ENCODE measurements at regions of chr13 and their contacts with region 1.

Region 1: GRCh38 chr13:113816946-113817859 is 46.7 kb downstream of the GAS6 start:
- DNase-seq: peak; percentile 69 to 90 (median 85)
- ATAC-seq: peak; percentile 91
- H3K4me3 ChIP-seq: no peak overlapping the region
- H3K4me3 Mint-ChIP-seq: peak overlapping the region; percentile 75 to 100 (median 86)
- H3K27ac ChIP-seq: no peak overlapping the region
- H3K27ac Mint-ChIP-seq: peak overlapping the region in 8 of 9 donors; percentile 40 to 95 (median 76)
- H3K4me1 ChIP-seq: peaks cover 10 to 11% of the 10 kb centered on the region in 2 donors
- H3K4me1 Mint-ChIP-seq: peaks cover 13 to 30% (median 23%) of the 10 kb centered on the region in 7 donors
- H3K27me3 ChIP-seq: no peaks in the 10 kb centered on the region
- H3K27me3 Mint-ChIP-seq: peaks cover 0 to 3% (median 0%) of the 10 kb centered on the region in 5 donors

Region 2: DNA sequence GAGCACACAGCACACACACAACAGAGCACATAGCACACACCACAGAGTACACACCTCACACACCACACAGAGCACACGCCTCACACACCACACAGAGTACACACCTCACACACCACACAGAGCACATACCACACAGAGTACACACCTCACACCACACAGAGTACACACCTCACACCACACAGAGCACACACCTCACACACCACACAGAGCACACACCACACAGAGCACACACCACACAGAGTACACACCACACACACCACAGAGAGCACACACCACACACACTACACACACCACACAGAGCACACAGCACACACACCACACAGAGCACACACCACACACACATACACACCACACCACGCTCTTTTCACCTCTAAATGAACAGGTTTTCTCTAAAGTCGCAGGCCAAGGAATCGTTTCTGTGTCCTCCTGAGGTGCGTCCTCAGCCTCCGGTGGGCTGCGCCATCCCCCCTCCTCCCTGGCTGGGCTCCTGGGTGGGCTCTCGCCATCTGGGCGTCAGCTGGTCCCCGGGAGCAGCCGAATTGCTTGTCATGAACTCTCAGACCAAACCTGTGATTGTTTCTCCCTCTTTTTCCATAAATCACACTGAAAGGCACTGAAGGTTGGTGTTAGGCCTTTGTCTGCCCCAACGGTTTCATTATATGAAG is 20.9 kb before region 1 on chr13:
- CTCF ChIA-PET with region 1: no interaction called
- POLR2A ChIA-PET with region 1: no interaction called
- intact Hi-C with region 1: no loop called
- DNase-seq: no peak
- ATAC-seq: no peak
- H3K4me3 ChIP-seq: no peak overlapping the region
- H3K4me3 Mint-ChIP-seq: no peak overlapping the region
- H3K27ac ChIP-seq: no peak overlapping the region
- H3K27ac Mint-ChIP-seq: no peak overlapping the region
- H3K4me1 ChIP-seq: no peaks in the 10 kb centered on the region
- H3K4me1 Mint-ChIP-seq: no peaks in the 10 kb centered on the region
- H3K27me3 ChIP-seq: no peaks in the 10 kb centered on the region
- H3K27me3 Mint-ChIP-seq: peaks cover 0 to 4% (median 0%) of the 10 kb centered on the region in 5 donors

Region 3: DNA sequence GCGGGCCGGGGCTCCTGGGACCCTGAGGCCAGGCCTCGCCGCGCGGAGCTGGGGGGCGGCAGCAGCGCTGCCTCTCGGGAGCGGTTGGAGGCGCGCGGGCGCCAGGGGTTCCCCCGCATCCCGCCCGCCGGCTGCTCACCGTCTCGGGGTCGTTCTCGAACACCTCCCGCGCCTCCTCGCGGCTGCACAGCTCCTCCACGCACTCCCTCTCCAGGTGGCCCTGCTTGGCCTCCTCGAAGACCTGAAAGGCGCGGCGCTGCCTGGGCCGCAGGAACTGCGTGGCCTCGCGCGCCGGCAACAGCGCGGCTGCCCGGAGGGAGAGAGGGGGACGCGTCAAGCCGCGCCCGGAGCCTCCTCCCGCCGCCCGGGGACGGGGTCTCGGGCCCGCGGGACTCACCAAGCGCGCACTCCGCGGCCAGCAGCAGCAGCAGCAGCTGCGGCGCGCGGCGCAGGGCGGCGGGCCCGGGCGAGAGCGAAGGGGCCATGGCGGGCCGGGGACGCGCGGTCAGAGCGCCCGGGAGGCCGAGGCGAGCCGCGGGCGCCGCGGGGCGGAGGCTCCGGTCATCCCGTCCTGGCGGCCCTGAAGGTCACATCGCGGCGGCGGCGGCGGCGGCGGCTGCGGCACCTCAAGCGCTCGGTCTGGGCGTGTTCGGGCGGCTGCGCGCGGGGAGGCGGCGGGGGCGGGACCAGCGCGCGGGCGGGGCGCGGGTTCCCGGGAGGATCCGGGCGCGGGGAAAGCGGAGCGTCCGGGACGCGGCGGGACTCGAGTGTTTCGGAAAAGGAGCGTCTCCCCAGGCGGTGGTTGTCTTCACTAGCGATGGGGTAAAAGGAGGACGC is 46.5 kb after region 1 on chr13 and contains the start of gene GAS6:
- CTCF ChIA-PET with region 1: no interaction called
- POLR2A ChIA-PET with region 1: no interaction called
- intact Hi-C with region 1: loop called in 1 of 2 experiments (anchors 5 kb)
- DNase-seq: peak in 2 of 9 donors; percentile 23 to 33
- ATAC-seq: peak; percentile 49
- H3K4me3 ChIP-seq: no peak within 1 kb of the TSS
- H3K4me3 Mint-ChIP-seq: peak within 1 kb of the TSS; percentile 75 to 86 (median 82)
- H3K27ac ChIP-seq: no peak within 1 kb of the TSS
- H3K27ac Mint-ChIP-seq: no peak within 1 kb of the TSS
- H3K4me1 ChIP-seq: peaks cover 0 to 5% of the 10 kb centered on the region in 2 donors
- H3K4me1 Mint-ChIP-seq: peaks cover 6 to 16% (median 14%) of the 10 kb centered on the region in 7 donors
- H3K27me3 ChIP-seq: peaks cover 6 to 17% of the 10 kb centered on the region in 2 donors
- H3K27me3 Mint-ChIP-seq: peaks cover 41 to 58% (median 43%) of the 10 kb centered on the region in 5 donors
- total RNA-seq, gene GAS6: 2.4 to 5.5 (median 3.2) TPM

Region 4: GRCh38 chr13:113928685-113929627 is 111.8 kb after region 1 on chr13:
- CTCF ChIA-PET with region 1: no interaction called
- POLR2A ChIA-PET with region 1: no interaction called
- intact Hi-C with region 1: no loop called
- DNase-seq: no peak
- ATAC-seq: no peak
- H3K4me3 ChIP-seq: no peak overlapping the region
- H3K4me3 Mint-ChIP-seq: no peak overlapping the region
- H3K27ac ChIP-seq: no peak overlapping the region
- H3K27ac Mint-ChIP-seq: no peak overlapping the region
- H3K4me1 ChIP-seq: peaks cover 0 to 14% of the 10 kb centered on the region in 2 donors
- H3K4me1 Mint-ChIP-seq: peaks cover 0 to 11% (median 0%) of the 10 kb centered on the region in 7 donors
- H3K27me3 ChIP-seq: no peaks in the 10 kb centered on the region
- H3K27me3 Mint-ChIP-seq: peaks cover 0 to 21% (median 0%) of the 10 kb centered on the region in 5 donors

Region 5: DNA sequence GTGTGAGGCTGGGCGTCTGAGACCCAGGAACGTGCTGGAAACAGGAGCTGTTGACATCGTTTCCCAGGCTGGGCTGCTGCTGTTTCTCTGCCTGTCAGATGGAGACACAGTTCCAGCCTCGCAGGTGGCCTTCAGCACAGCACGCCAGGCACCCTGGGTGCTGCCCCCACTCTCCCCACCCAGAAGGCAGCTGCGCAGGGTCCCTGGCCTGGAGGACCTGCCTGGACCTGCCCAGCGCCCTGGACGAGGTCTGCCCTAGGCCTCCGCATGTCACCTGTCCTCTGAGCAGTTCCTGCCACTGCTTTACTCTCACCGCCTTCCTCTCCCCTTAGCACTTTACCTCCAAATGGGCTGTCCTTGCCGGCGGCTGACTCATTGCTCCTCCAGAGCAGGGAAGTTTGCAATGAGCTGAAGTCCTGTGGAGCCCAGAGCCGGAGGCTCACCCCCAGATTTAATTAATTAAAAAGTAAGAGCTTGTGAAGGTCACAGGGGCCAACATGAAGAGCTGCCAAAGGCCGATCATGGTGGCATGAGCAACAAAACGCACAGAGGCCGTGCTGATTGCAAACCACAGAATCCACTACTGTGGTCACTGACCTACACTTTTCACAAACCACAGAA is 124.5 kb after region 1 on chr13:
- CTCF ChIA-PET with region 1: no interaction called
- POLR2A ChIA-PET with region 1: no interaction called
- intact Hi-C with region 1: no loop called
- DNase-seq: no peak
- ATAC-seq: no peak
- H3K4me3 ChIP-seq: no peak overlapping the region
- H3K4me3 Mint-ChIP-seq: no peak overlapping the region
- H3K27ac ChIP-seq: no peak overlapping the region
- H3K27ac Mint-ChIP-seq: peak overlapping the region in 4 of 9 donors; percentile 12 to 65 (median 30)
- H3K4me1 ChIP-seq: no peaks in the 10 kb centered on the region
- H3K4me1 Mint-ChIP-seq: peaks cover 0 to 5% (median 0%) of the 10 kb centered on the region in 7 donors
- H3K27me3 ChIP-seq: no peaks in the 10 kb centered on the region
- H3K27me3 Mint-ChIP-seq: peaks cover 0 to 2% (median 0%) of the 10 kb centered on the region in 5 donors

Region 6: DNA sequence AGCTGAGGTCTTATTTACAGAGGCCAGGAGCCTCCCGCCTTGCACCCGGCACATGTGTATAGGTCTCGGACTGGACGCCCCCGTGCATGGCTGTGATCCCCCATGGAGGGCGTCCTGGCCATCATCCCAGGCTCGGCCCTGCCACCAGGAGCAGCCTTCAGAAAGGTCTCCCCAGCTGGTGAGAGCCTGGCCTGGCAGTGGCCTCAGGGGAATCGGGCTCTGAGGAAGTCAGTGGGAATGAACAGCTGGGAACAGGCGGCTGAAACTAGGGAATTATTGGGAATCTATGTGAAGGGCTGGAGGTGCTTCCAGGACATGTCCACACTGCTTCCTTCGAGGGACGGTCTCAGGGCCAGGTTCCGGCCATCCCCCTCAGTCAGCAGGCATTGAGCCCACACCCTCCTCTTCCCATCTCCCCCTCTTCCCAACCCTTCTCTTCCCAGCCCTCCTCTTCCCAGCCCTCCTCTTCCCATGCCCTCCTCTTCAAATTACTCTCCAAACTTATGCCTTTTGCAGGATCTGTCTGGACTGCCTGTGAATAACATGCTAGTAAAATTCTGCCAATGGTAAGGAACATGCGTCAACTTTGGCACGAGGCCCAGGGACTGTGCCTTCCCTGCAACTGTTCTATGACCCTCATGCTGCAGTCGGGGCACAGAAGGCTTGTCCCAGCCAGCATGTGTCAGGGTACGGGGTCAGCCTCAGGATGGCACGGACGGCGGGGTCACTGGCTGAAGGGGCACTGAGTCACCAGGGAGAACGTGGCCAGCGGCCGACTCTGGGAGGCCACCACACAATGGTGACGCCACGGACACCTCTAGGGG is 180.9 kb after region 1 on chr13:
- CTCF ChIA-PET with region 1: no interaction called
- POLR2A ChIA-PET with region 1: no interaction called
- intact Hi-C with region 1: loop called in 1 of 2 experiments (anchors 10 kb)
- DNase-seq: no peak
- ATAC-seq: no peak
- H3K4me3 ChIP-seq: no peak overlapping the region
- H3K4me3 Mint-ChIP-seq: peak overlapping the region in 2 of 10 donors; percentile 39 to 67
- H3K27ac ChIP-seq: no peak overlapping the region
- H3K27ac Mint-ChIP-seq: peak overlapping the region in 7 of 9 donors; percentile 23 to 81 (median 38)
- H3K4me1 ChIP-seq: no peaks in the 10 kb centered on the region
- H3K4me1 Mint-ChIP-seq: peaks cover 0 to 6% (median 3%) of the 10 kb centered on the region in 7 donors
- H3K27me3 ChIP-seq: no peaks in the 10 kb centered on the region
- H3K27me3 Mint-ChIP-seq: no peaks in the 10 kb centered on the region

Region 7: DNA sequence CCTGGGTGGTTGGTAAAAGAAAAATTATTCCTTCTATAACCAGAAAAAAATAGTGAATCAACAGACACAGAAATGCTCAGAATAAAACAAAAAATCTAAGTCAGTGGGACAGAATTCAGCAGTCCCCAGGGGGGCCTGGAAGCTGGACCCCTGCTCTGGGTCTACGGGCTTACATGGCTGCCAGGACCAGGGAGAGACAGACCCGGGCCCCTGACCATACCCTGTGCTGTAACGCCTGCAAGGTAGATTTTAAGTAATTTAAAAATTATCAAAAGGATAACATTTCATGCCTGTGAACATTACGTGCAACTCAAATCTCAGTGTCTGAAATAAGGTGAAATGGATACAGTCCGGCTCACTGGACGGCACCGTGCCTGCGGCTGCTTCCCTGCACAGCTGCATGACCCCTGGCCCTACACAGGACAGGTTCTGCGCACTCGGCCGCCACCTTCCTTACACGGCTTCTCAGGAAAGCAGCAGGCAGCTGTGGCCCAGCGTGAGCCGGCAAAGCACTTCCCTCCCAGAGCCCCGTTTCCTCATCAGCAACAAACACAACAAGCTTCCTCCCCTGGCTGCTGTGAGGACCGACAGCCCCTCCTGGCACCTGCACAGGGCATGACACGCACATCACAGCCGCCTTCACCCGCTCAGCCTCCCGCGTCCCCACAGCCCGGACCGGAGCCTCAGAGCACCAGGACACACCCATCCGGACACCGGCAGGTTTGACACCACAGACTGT is 293.1 kb after region 1 on chr13:
- CTCF ChIA-PET with region 1: interaction called, 4 read pairs
- POLR2A ChIA-PET with region 1: no interaction called
- intact Hi-C with region 1: loop called (anchors 1 to 5 kb)
- DNase-seq: peak; percentile 54 to 88 (median 84)
- ATAC-seq: peak; percentile 86
- H3K4me3 ChIP-seq: peak overlapping the region; percentile 59
- H3K4me3 Mint-ChIP-seq: peak overlapping the region; percentile 83 to 95 (median 87)
- H3K27ac ChIP-seq: peak overlapping the region; percentile 73
- H3K27ac Mint-ChIP-seq: peak overlapping the region; percentile 90 to 98 (median 96)
- H3K4me1 ChIP-seq: peaks cover 70 to 93% of the 10 kb centered on the region in 2 donors
- H3K4me1 Mint-ChIP-seq: peaks cover 54 to 90% (median 74%) of the 10 kb centered on the region in 7 donors
- H3K27me3 ChIP-seq: no peaks in the 10 kb centered on the region
- H3K27me3 Mint-ChIP-seq: no peaks in the 10 kb centered on the region

Region 8: GRCh38 chr13:114143806-114144605 is 326.8 kb after region 1 on chr13:
- CTCF ChIA-PET with region 1: no interaction called
- POLR2A ChIA-PET with region 1: no interaction called
- intact Hi-C with region 1: loop called in 1 of 2 experiments (anchors 2 kb)
- DNase-seq: peak in 3 of 9 donors; percentile 48 to 57 (median 56)
- ATAC-seq: no peak
- H3K4me3 ChIP-seq: peak overlapping the region; percentile 18
- H3K4me3 Mint-ChIP-seq: peak overlapping the region in 5 of 10 donors; percentile 48 to 67 (median 51)
- H3K27ac ChIP-seq: peak overlapping the region; percentile 74
- H3K27ac Mint-ChIP-seq: no peak overlapping the region
- H3K4me1 ChIP-seq: peaks cover 76 to 84% of the 10 kb centered on the region in 2 donors
- H3K4me1 Mint-ChIP-seq: peaks cover 31 to 48% (median 42%) of the 10 kb centered on the region in 7 donors
- H3K27me3 ChIP-seq: no peaks in the 10 kb centered on the region
- H3K27me3 Mint-ChIP-seq: peaks cover 0 to 12% (median 0%) of the 10 kb centered on the region in 5 donors

Region 9: GRCh38 chr13:114234645-114235421 is 417.6 kb after region 1 on chr13 and contains the start of gene CDC16:
- CTCF ChIA-PET with region 1: no interaction called
- POLR2A ChIA-PET with region 1: no interaction called
- intact Hi-C with region 1: loop called (anchors 2 kb)
- DNase-seq: peak; percentile 53 to 87 (median 69)
- ATAC-seq: peak; percentile 94
- H3K4me3 ChIP-seq: peak within 1 kb of the TSS; percentile 87
- H3K4me3 Mint-ChIP-seq: peak within 1 kb of the TSS; percentile 82 to 93 (median 88)
- H3K27ac ChIP-seq: peak within 1 kb of the TSS; percentile 79
- H3K27ac Mint-ChIP-seq: peak within 1 kb of the TSS; percentile 78 to 91 (median 86)
- H3K4me1 ChIP-seq: peaks cover 9 to 11% of the 10 kb centered on the region in 2 donors
- H3K4me1 Mint-ChIP-seq: peaks cover 22 to 29% (median 26%) of the 10 kb centered on the region in 7 donors
- H3K27me3 ChIP-seq: no peaks in the 10 kb centered on the region
- H3K27me3 Mint-ChIP-seq: peaks cover 0 to 12% (median 4%) of the 10 kb centered on the region in 5 donors
- total RNA-seq, gene CDC16: 66.0 to 108 (median 88.7) TPM